Left cardiac atrium (tissue), 4 donors: ENCODE measurements at regions of chr3 and their contacts with region 1.

Region 1: GRCh38 chr3:32143849-32144757 is 37.7 kb downstream of the GPD1L start:
- DNase-seq: no peak
- ATAC-seq: peak; percentile 82 to 85

Region 2: DNA sequence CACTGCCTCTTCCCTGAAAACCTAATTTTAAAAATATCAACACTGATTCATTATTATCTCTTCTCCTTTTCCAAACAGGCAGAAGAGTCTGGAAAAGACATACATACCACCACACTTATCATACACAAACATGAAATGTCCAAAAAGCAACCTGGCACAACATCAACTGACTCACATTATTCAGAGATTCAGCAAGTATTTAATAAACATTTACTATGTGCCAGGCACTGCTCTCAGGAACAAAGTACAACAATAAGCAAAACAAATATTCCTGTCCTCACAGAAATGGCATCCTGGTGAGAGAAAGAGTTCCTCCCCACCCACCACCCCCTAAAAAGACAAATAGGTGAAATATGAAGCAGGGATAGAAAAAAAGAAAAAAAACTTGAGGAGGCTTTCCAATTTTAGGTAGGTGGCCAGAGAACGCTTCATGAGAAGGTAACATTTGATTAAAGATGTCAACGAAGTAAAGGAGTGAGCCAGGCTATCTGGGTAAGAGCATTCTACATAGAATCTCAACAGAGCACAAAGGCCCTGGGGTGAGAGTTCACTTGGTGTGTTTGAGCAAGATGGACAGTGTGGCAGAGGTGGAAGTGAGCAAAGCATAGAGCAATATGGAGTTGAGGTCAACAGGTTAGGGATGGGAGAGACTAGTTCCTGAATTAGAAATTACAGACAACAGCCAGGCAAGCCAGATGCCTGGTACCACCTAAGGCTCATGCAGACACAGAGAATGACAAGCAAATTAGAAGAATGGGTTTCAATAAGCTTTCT is 304.8 kb before region 1 on chr3:
- intact Hi-C with region 1: no loop called
- DNase-seq: no peak
- ATAC-seq: no peak

Region 3: GRCh38 chr3:32018757-32019564 is 125.1 kb before region 1 on chr3:
- intact Hi-C with region 1: loop called (anchors 1 to 5 kb)
- DNase-seq: no peak
- ATAC-seq: peak; percentile 77 to 87